ENCODE measurements at regions of chr9 and their contacts with region 1.

Region 1: DNA sequence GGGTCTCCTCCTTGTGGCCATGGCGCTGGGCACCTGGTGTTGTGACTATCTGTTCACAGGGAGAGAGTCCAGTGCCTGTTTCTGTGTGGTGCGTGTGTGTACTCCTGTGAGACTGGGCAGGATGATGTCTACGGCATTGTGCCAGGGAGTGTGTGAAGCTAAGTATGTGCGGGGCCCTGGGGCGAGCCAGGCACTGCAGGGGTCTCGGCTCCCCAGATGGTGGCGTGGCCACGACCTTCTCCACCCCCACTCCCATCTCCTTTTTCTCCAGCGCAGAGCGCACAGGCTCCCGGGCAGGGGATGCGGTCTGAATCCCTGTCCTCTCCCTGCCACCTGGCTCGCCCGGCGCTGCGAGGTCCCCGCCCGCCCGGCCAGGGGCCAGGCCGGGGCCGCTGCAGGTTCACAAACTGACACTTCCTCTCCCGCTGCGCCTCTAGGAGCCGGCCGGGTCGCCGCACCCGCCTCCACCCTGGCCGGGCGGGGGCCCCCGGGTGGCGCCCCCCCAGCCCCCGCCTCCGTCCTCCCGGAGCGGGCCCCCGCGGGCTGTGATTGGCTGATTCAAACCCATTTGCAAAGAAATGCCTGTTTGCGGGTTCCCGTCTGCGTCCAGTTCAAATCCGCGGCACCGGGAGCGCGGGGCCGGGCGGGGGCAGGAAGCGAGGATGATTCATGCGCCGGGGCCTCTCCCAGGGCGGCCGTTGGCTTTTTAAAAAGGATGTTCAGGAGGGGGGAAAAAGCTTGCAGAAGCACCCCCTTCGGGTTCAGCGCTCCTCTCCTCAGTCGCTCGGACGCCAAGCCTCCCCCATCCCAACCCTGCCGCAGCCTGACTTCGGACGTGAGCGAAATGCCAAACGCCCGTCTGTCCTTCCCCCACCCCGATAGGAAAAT is 790 bp downstream of the PHF19 start:
- H3K4me3 Mint-ChIP-seq: peak overlapping the region; percentile 78
- H3K27ac Mint-ChIP-seq: peak overlapping the region; percentile 82
- H3K4me1 Mint-ChIP-seq: peaks cover 25% of the 10 kb centered on the region
- H3K27me3 Mint-ChIP-seq: no peaks in the 10 kb centered on the region

Region 2: DNA sequence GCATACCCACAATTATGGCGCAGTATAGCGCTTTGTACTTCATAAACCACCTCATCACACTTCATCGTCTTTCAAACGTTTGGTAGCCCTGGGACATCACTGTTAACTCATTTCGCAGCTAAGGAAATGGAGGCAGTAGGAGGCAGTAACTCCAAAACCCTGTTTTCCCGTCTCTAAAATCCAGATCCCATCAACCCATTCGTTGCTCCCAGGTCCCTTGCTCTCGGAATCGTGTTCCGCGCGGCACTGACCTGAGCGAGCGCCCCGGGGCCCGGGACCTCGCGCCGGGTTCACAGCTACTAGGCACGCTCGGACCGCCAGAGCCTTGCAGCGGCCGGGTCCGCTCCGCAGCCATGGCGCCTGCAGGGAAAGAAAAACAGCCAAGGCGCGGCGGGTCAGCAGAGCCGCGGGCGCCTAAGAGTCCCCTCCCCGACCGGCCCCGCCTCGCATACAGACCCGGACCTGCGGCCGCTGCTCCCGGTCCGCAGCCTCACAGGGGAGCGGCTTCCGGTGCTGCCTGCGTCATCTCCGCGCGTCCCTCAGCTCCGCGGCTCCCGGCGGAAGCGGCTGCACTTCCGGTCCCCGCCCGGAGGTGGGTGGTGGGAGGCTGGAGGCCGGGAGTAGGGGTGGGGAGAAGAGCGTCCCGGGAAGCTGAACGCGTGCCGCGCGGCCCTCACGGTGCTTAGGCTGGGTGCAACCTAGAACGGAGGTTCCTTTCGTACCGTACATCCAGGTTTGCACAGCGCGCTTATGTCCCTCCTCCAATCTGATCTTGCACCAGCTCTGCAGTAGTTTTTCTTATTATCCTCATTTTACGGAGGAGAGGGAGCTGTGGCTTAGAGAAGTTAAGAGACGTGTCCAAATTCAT is 83.1 kb before region 1 on chr9 and contains the start of gene FBXW2:
- intact Hi-C with region 1: loop called (anchors 2 kb)
- H3K4me3 Mint-ChIP-seq: peak within 1 kb of the TSS; percentile 97
- H3K27ac Mint-ChIP-seq: peak within 1 kb of the TSS; percentile 94
- H3K4me1 Mint-ChIP-seq: peaks cover 44% of the 10 kb centered on the region
- H3K27me3 Mint-ChIP-seq: no peaks in the 10 kb centered on the region

Region 3: GRCh38 chr9:120842690-120843499 is 33.3 kb before region 1 on chr9 and contains the start of gene PSMD5:
- intact Hi-C with region 1: loop called (anchors 2 kb)
- H3K4me3 Mint-ChIP-seq: peak within 1 kb of the TSS; percentile 97
- H3K27ac Mint-ChIP-seq: peak within 1 kb of the TSS; percentile 100
- H3K4me1 Mint-ChIP-seq: peaks cover 53% of the 10 kb centered on the region
- H3K27me3 Mint-ChIP-seq: no peaks in the 10 kb centered on the region

Region 4: DNA sequence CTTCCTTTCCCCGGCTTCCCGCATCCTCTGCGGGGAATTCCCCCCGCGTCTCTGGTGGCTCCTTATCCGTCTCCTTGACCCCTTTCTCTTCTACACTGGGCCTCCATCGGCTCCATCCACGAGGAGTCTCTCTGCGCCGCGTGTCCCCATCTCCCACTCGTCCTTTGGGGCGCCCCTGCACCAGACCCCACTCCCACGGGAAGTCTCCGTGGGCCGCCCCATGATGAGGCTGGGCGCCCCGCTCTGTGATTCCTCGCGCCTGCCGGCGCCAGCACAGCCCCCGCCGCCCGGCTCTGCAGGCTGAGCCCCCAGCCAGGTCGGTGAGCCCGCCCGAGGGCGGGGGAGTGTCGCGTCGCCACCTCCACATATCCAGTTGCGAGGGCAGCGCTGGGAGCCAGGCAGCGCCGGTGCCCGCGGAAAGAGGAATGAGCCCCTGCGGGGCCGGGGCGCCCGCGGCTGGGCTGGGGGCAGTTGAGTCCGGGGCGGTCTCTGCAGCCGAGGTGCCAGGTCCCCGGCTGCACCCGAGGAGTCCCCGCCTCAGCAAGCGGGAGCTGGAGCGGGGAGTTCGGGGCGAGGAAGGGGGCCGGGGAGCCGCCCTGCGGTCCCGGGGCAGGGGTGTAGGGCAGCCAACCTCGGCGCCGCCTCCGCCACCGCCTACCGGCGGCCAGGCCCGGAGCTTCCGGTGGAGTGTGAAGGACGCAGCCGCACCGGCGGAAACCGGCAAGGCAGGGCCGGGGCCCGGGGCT is 52.5 kb after region 1 on chr9:
- intact Hi-C with region 1: loop called (anchors 2 kb)
- H3K4me3 Mint-ChIP-seq: peak overlapping the region; percentile 75
- H3K27ac Mint-ChIP-seq: peak overlapping the region; percentile 77
- H3K4me1 Mint-ChIP-seq: peaks cover 81% of the 10 kb centered on the region
- H3K27me3 Mint-ChIP-seq: no peaks in the 10 kb centered on the region